Cardiac septum (tissue), 1 donor: ENCODE measurements at regions of chr16 and their contacts with region 1.

Region 1: DNA sequence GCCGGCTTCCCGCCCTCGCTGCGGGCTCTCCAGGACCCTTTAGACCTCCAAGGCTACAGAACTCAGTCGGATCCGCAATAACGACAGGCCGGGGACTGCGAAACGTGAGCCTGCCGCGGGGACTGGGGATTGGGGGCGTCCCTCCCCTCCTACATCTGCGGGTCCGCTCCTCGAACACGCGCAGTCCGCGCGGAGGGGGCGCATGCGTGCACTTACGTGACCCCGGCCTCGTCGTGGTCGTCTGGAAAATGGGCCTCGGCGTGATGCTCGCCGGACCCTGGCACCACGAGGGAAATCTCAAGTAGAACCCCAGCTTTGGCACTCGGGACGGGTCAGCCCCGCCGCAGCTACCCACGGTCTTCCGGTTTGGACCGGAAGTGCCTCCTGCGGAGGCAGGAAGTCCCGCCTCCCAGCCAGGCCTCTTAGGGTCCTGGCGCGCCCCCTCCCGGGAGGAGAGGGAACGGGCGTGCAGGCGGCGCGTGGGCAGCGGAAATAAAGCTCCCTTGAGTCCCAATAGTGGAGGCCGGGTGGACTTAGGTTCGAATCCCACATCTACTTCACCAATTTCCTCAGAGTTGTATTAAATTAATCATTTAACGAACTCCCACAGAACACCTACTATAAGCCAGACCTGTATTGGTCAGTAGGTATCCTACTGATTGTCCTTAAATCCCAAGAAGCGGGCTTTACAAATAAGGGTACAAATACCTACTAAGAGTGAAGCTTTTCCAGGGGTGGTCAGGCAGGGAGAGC is at the start of gene TAF1C:
- DNase-seq: peak; percentile 95
- total RNA-seq, gene TAF1C: 20.9 TPM

Region 2: GRCh38 chr16:83755391-83755790 is 431.5 kb before region 1 on chr16:
- intact Hi-C with region 1: no loop called
- DNase-seq: no peak

Region 3: GRCh38 chr16:83967806-83968305 is 219.0 kb before region 1 on chr16 and contains the start of gene NECAB2:
- intact Hi-C with region 1: loop called (anchors 5 kb)
- DNase-seq: peak; percentile 87
- total RNA-seq, gene NECAB2: 2.5 TPM

Region 4: GRCh38 chr16:84072014-84072413 is 114.8 kb before region 1 on chr16:
- intact Hi-C with region 1: loop called (anchors 5 kb)
- DNase-seq: no peak

Region 5: GRCh38 chr16:84087466-84088151 is 99.3 kb before region 1 on chr16:
- intact Hi-C with region 1: loop called (anchors 2 kb)
- DNase-seq: no peak

Region 6: DNA sequence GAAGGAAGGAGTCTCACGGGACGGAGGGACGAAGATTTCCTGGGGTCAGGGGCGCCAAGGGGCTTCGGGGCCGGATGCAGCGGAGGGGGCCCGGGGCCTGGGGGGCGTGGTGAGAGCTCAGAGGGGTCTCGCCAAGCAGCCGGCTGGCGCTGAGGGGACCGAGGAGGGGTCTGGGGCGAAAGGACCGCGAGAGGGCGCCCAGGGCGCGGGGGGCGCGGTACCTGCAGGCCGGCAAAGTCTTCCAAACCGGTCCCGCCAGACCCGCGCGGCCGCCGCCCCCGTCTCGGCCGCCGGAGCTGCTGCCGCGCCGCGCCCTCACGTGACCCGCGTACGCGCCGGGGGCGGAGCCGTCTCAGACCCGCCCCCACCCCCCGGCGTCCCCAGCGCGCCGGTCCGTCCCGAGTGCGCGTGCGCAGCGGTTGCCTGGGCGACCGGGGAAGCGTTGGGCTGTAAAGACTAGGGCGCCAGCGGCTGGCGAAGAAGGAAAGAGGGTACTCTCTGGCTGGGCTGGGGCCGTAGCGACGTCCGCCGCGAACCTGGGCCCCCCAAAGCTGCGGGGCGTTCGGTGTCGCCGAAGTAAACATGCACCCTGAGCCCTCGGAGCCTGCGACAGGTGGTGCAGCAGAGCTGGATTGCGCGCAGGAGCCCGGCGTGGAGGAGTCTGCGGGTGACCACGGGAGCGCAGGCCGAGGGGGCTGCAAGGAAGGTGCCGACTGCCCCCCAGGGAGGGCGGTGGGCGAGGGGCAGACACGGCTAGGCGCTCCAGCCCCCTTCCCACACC is 41.8 kb before region 1 on chr16 and contains the starts of genes DNAAF1 and HSDL1:
- intact Hi-C with region 1: loop called (anchors 5 kb)
- DNase-seq: peak; percentile 95
- total RNA-seq, gene DNAAF1: not detected
- total RNA-seq, gene HSDL1: 17.4 TPM

Region 7: DNA sequence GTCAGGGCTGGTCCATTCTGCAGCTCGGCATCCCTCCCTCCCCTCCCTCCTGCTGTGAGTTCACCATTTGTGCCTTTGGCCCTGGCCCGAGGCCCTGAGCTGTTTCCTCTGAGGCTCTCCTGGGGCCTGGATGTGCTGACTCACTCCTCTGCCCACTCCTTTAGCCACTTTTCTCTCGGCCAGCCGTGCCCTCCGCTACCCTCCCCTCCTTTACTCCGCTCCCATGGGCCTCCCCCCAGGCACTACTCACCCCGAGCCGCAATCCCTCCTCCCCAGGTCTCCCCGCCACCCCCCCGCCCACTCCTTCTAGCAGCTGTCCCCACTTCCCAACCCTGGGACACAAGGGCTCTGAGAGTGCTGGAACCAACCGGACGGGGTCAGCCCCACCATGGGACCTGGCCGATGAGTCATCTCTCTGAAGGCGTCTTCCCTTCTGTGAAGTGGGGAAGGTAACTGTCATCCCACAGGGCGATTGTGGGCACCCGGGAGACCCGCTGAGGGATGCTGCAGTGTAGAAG is 41.5 kb after region 1 on chr16:
- intact Hi-C with region 1: no loop called
- DNase-seq: peak; percentile 81